ENCODE measurements at regions of chr9 and their contacts with region 1.

Region 1: GRCh38 chr9:109224751-109225150 is 57.7 kb upstream of the FRRS1L start:
- DNase-seq: no peak
- ATAC-seq: no peak
- H3K4me3 ChIP-seq: no peak overlapping the region
- H3K27ac ChIP-seq: no peak overlapping the region
- H3K4me1 ChIP-seq: no peaks in the 10 kb centered on the region
- H3K27me3 ChIP-seq: peaks cover 10 to 33% of the 10 kb centered on the region in 2 experiments
- CTCF ChIP-seq: no peak
- EP300 ChIP-seq: no peak
- POLR2A ChIP-seq: no peak
- RAD21 ChIP-seq: no peak

Region 2: GRCh38 chr9:108850293-108850897 is 374.4 kb before region 1 on chr9:
- CTCF ChIA-PET with region 1: no interaction called
- POLR2A ChIA-PET with region 1: interaction called, 3 read pairs
- in situ Hi-C with region 1: no loop called
- intact Hi-C with region 1: loop called (anchors 10 kb)
- DNase-seq: peak in 2 of 4 experiments; percentile 23 to 30
- ATAC-seq: peak; percentile 70
- H3K4me3 ChIP-seq: no peak overlapping the region
- H3K27ac ChIP-seq: no peak overlapping the region
- H3K4me1 ChIP-seq: peaks cover 0 to 9% of the 10 kb centered on the region in 2 experiments; a peak in 1 of 5 replicates
- H3K27me3 ChIP-seq: peaks cover 22 to 30% of the 10 kb centered on the region in 2 experiments
- CTCF ChIP-seq: peak; percentile 24 to 63 (median 45); a peak in 4 of 6 replicates
- EP300 ChIP-seq: no peak
- POLR2A ChIP-seq: no peak
- RAD21 ChIP-seq: peak; percentile 25 to 73; a peak in 3 of 4 replicates

Region 3: GRCh38 chr9:109966643-109967368 is 742.1 kb after region 1 on chr9:
- CTCF ChIA-PET with region 1: no interaction called
- POLR2A ChIA-PET with region 1: no interaction called
- in situ Hi-C with region 1: no loop called
- intact Hi-C with region 1: no loop called
- DNase-seq: no peak
- ATAC-seq: no peak
- H3K4me3 ChIP-seq: no peak overlapping the region
- H3K27ac ChIP-seq: no peak overlapping the region
- H3K4me1 ChIP-seq: no peaks in the 10 kb centered on the region
- H3K27me3 ChIP-seq: no peaks in the 10 kb centered on the region
- CTCF ChIP-seq: no peak
- EP300 ChIP-seq: no peak
- POLR2A ChIP-seq: no peak
- RAD21 ChIP-seq: no peak